Aorta (tissue), 5 donors: ENCODE measurements at regions of chr1 and their contacts with region 1.

Region 1: GRCh38 chr1:163315773-163316374 is 5.9 kb upstream of the NUF2 start:
- DNase-seq: no peak
- ATAC-seq: peak; percentile 56
- H3K4me3 ChIP-seq: no peak overlapping the region
- H3K27ac ChIP-seq: no peak overlapping the region
- H3K4me1 ChIP-seq: peaks cover 0 to 2% of the 10 kb centered on the region in 2 donors
- H3K27me3 ChIP-seq: no peaks in the 10 kb centered on the region

Region 2: GRCh38 chr1:162847839-162848453 is 467.9 kb before region 1 on chr1:
- intact Hi-C with region 1: loop called (anchors 5 kb)
- DNase-seq: peak; percentile 84 to 93
- ATAC-seq: peak; percentile 78
- H3K4me3 ChIP-seq: no peak overlapping the region
- H3K27ac ChIP-seq: no peak overlapping the region
- H3K4me1 ChIP-seq: no peaks in the 10 kb centered on the region
- H3K27me3 ChIP-seq: no peaks in the 10 kb centered on the region

Region 3: DNA sequence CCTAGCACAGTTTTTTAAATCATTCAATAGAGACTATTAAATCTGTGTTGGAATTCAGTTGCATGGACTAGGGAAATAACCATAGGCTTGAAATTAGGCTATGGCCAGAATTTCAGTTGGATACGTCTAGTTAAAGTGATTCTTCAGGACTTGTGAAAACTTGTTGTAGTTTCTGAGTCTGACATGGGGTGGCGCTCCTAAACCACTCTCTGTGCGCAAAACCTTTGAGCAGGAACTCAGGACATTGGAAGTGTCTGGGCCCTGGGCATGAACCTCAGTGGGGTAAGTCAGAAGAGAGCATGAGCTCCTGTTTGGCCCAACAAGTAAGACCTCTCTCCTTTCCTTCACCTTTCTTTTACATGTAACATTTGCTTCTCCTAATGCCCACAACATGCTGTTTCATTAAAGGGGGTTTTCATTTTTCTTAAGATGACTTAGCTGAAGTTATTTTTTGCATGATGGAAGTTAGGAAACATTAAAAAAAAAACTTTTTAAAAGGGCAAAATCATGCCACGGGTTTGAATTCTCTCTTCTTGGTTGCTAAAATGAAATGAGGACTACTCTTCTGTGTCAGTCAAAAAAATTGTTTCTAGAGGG is 437.8 kb before region 1 on chr1:
- intact Hi-C with region 1: loop called (anchors 2 to 5 kb)
- DNase-seq: peak; percentile 67 to 77
- ATAC-seq: peak; percentile 80
- H3K4me3 ChIP-seq: no peak overlapping the region
- H3K27ac ChIP-seq: no peak overlapping the region
- H3K4me1 ChIP-seq: peaks cover 0 to 1% of the 10 kb centered on the region in 2 donors
- H3K27me3 ChIP-seq: no peaks in the 10 kb centered on the region

Region 4: GRCh38 chr1:163174524-163175437 is 141.1 kb before region 1 on chr1:
- intact Hi-C with region 1: loop called in 1 of 2 experiments (anchors 10 kb)
- DNase-seq: peak; percentile 85 to 90
- ATAC-seq: peak; percentile 72
- H3K4me3 ChIP-seq: peak overlapping the region in 1 of 2 donors; percentile 69
- H3K27ac ChIP-seq: peak overlapping the region; percentile 90 to 95
- H3K4me1 ChIP-seq: peaks cover 2 to 3% of the 10 kb centered on the region in 2 donors
- H3K27me3 ChIP-seq: no peaks in the 10 kb centered on the region

Region 5: DNA sequence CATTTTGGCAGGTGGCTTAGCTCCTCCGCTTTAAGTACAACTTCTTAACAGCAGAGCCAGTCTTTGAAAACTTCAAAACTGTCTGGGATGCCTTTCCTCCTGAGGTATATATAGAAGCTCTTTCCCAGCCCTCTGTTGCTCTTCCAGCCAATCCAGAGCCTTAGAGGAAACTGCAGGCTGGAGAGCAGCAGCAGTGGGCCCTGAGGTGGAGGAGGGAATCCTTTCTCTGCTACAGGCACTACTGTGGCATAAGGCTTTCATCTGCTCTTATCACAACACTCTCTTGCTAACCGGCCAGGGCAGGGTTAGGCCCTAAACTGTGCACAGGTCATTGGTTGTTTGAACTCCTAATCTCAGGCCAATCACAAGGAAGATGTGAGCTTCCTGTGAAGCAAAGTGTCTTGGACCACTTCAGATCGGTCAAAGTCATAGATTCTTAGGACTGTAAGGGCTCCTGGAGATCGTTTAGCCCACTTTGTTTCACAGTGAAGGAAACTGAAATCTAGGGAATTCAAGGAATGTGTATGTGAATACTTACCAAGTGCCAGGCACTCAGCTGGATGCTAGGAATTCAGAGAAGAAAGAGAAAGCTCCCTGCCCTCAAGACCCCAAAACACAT is 112.9 kb before region 1 on chr1 and contains the start of gene RGS5:
- intact Hi-C with region 1: loop called (anchors 5 to 10 kb)
- DNase-seq: peak in 1 of 2 donors; percentile 50
- ATAC-seq: peak; percentile 87
- H3K4me3 ChIP-seq: peak within 1 kb of the TSS; percentile 94 to 99
- H3K27ac ChIP-seq: peak within 1 kb of the TSS; percentile 88 to 93
- H3K4me1 ChIP-seq: peaks cover 2 to 3% of the 10 kb centered on the region in 2 donors
- H3K27me3 ChIP-seq: no peaks in the 10 kb centered on the region
- total RNA-seq, gene RGS5: 1,469 to 2,702 TPM